Esophagus muscularis mucosa (tissue), 4 donors: ENCODE measurements at regions of chr3 and their contacts with region 1.

Region 1: GRCh38 chr3:149717391-149718056 is 34.8 kb downstream of the COMMD2 start:
- DNase-seq: no peak
- H3K4me3 ChIP-seq: peak overlapping the region in 1 of 4 donors; percentile 13
- H3K27ac ChIP-seq: peak overlapping the region in 2 of 4 donors; percentile 27 to 40
- H3K4me1 ChIP-seq: peaks cover 0 to 11% (median 7%) of the 10 kb centered on the region in 4 donors
- H3K27me3 ChIP-seq: no peaks in the 10 kb centered on the region
- CTCF ChIP-seq: peak; percentile 84 to 87 (median 86)
- EP300 ChIP-seq: no peak
- POLR2A ChIP-seq: no peak

Region 2: DNA sequence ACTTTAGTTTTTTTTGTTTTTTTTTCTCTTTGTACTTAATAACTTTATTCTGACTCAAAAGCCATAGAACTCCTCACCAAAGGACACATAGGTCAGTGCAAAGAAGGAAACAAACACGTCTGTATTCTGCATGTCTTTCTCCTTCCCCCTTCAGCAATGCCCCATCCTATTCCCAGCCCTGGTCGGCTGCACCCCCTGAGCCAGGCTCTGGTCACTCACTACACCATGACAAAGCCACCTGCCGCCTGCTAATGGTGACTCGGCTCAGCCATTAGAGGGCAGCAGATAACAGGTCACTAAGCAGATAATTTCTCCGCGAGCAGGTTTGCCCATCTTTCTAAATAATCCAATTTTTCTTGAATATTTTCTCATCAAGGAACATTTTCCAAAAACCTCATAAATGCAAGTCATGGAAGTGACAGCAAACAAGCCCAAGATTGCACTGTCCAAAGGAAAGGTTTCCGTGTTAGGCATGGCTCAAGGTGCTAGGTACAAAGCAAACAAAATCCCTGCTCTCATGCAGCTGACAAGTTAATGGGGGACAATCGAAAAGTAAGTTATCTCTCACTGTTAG is 205.2 kb before region 1 on chr3:
- intact Hi-C with region 1: loop called (anchors 1 kb)
- DNase-seq: no peak
- H3K4me3 ChIP-seq: no peak overlapping the region
- H3K27ac ChIP-seq: no peak overlapping the region
- H3K4me1 ChIP-seq: peaks cover 3 to 24% (median 17%) of the 10 kb centered on the region in 4 donors
- H3K27me3 ChIP-seq: no peaks in the 10 kb centered on the region
- CTCF ChIP-seq: peak; percentile 82 to 87 (median 84)
- EP300 ChIP-seq: no peak
- POLR2A ChIP-seq: no peak

Region 3: DNA sequence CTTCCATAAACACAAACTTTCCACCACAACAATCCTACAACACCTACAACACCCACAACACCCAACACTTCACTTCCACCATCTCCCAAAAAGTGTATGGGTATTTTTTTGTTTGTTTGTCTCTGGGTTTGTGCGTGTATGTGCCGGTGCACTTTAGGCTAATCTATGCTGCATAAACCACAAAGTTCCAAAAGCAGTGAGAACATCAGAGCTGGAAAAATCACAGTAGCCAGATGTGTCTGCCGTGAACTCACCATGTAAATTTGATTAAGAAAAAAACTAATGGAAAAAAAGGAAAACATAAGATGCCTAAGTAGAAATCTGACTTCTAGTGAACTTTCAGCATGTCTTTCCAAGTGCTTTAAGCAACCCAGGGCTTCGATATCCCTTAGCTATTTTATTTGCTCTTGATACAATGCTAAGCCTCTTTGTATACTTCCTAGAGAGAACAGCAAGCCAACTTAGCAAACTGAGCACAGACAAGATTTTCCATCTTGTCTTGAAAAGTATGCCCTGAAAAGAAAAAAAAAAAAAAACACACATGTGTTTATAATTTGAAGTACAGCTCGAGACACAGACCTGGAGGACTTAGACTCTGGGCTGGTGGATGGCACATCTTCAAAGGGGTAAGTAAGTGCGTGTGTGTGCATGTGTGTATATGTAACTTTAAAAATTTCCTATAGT is 151.1 kb before region 1 on chr3:
- intact Hi-C with region 1: loop called (anchors 5 kb)
- DNase-seq: no peak
- H3K4me3 ChIP-seq: no peak overlapping the region
- H3K27ac ChIP-seq: peak overlapping the region in 3 of 4 donors; percentile 5 to 36 (median 13)
- H3K4me1 ChIP-seq: peaks cover 18 to 81% (median 64%) of the 10 kb centered on the region in 4 donors
- H3K27me3 ChIP-seq: no peaks in the 10 kb centered on the region
- CTCF ChIP-seq: no peak
- EP300 ChIP-seq: no peak
- POLR2A ChIP-seq: no peak

Region 4: GRCh38 chr3:149670742-149671492 is 46.6 kb before region 1 on chr3:
- intact Hi-C with region 1: loop called (anchors 5 kb)
- DNase-seq: peak; percentile 70
- H3K4me3 ChIP-seq: no peak overlapping the region
- H3K27ac ChIP-seq: peak overlapping the region in 1 of 4 donors; percentile 39
- H3K4me1 ChIP-seq: peaks cover 0 to 9% (median 0%) of the 10 kb centered on the region in 4 donors
- H3K27me3 ChIP-seq: no peaks in the 10 kb centered on the region
- CTCF ChIP-seq: no peak
- EP300 ChIP-seq: no peak
- POLR2A ChIP-seq: no peak

Region 5: GRCh38 chr3:149783576-149783975 is 66.1 kb after region 1 on chr3:
- intact Hi-C with region 1: no loop called
- DNase-seq: no peak
- H3K4me3 ChIP-seq: no peak overlapping the region
- H3K27ac ChIP-seq: peak overlapping the region in 1 of 4 donors; percentile 9
- H3K4me1 ChIP-seq: peaks cover 5 to 16% (median 11%) of the 10 kb centered on the region in 4 donors
- H3K27me3 ChIP-seq: no peaks in the 10 kb centered on the region
- CTCF ChIP-seq: no peak
- EP300 ChIP-seq: no peak
- POLR2A ChIP-seq: no peak

Region 6: GRCh38 chr3:150005243-150006112 is 288.0 kb after region 1 on chr3:
- intact Hi-C with region 1: no loop called
- DNase-seq: no peak
- H3K4me3 ChIP-seq: no peak overlapping the region
- H3K27ac ChIP-seq: no peak overlapping the region
- H3K4me1 ChIP-seq: no peaks in the 10 kb centered on the region
- H3K27me3 ChIP-seq: no peaks in the 10 kb centered on the region
- CTCF ChIP-seq: no peak
- EP300 ChIP-seq: no peak
- POLR2A ChIP-seq: no peak